Caco-2 (cell line): ENCODE measurements at regions of chr1 and their contacts with region 1.

Region 1: GRCh38 chr1:179809506-179810366 is 66.6 kb downstream of the FAM163A start:
- DNase-seq: peak; percentile 70 to 71
- H3K4me3 ChIP-seq: no peak overlapping the region
- H3K4me3 Mint-ChIP-seq: no peak overlapping the region
- H3K27ac Mint-ChIP-seq: no peak overlapping the region
- H3K4me1 ChIP-seq: peaks cover 34% of the 10 kb centered on the region
- H3K4me1 Mint-ChIP-seq: peaks cover 12% of the 10 kb centered on the region
- H3K27me3 ChIP-seq: no peaks in the 10 kb centered on the region
- H3K27me3 Mint-ChIP-seq: peaks cover 14% of the 10 kb centered on the region
- CTCF ChIP-seq: peak; percentile 85 to 88

Region 2: GRCh38 chr1:179278920-179279319 is 530.8 kb before region 1 on chr1:
- CTCF ChIA-PET with region 1: no interaction called
- POLR2A ChIA-PET with region 1: no interaction called
- intact Hi-C with region 1: no loop called
- DNase-seq: no peak
- H3K4me3 ChIP-seq: no peak overlapping the region
- H3K4me3 Mint-ChIP-seq: no peak overlapping the region
- H3K27ac Mint-ChIP-seq: no peak overlapping the region
- H3K4me1 ChIP-seq: peaks cover 13% of the 10 kb centered on the region
- H3K4me1 Mint-ChIP-seq: peaks cover 14% of the 10 kb centered on the region
- H3K27me3 ChIP-seq: no peaks in the 10 kb centered on the region
- H3K27me3 Mint-ChIP-seq: no peaks in the 10 kb centered on the region
- CTCF ChIP-seq: no peak

Region 3: GRCh38 chr1:179706339-179706941 is 103.3 kb before region 1 on chr1:
- CTCF ChIA-PET with region 1: interaction called, 237 read pairs
- POLR2A ChIA-PET with region 1: interaction called, 9 read pairs
- intact Hi-C with region 1: loop called (anchors 1 kb)
- DNase-seq: peak; percentile 47 to 69
- H3K4me3 ChIP-seq: no peak overlapping the region
- H3K4me3 Mint-ChIP-seq: no peak overlapping the region
- H3K27ac Mint-ChIP-seq: no peak overlapping the region
- H3K4me1 ChIP-seq: peaks cover 8% of the 10 kb centered on the region
- H3K4me1 Mint-ChIP-seq: peaks cover 8% of the 10 kb centered on the region
- H3K27me3 ChIP-seq: no peaks in the 10 kb centered on the region
- H3K27me3 Mint-ChIP-seq: peaks cover 14% of the 10 kb centered on the region
- CTCF ChIP-seq: peak; percentile 75 to 80

Region 4: DNA sequence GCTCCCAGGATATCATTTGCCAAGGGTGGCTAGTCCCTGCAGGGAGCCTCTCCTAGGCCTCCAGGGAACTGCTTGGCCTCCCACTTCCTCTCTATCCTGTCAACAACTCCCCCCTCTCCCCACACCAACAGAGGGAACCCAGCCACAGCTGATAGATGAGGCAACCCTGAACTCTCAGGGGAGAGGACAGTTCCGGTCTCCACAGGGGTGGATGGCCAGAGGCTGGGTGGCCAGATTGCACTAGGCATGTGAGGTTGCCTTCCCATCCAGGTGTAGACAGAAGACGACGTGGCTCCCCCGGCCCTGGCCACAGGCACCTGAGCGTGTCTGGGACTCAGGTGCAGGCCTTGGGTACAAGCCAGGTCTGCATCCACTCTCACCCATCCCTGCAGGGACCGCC is 14.5 kb after region 1 on chr1:
- CTCF ChIA-PET with region 1: interaction called, 14 read pairs
- POLR2A ChIA-PET with region 1: no interaction called
- intact Hi-C with region 1: no loop called
- DNase-seq: no peak
- H3K4me3 ChIP-seq: no peak overlapping the region
- H3K4me3 Mint-ChIP-seq: no peak overlapping the region
- H3K27ac Mint-ChIP-seq: no peak overlapping the region
- H3K4me1 ChIP-seq: no peaks in the 10 kb centered on the region
- H3K4me1 Mint-ChIP-seq: peaks cover 6% of the 10 kb centered on the region
- H3K27me3 ChIP-seq: no peaks in the 10 kb centered on the region
- H3K27me3 Mint-ChIP-seq: no peaks in the 10 kb centered on the region
- CTCF ChIP-seq: no peak

Region 5: DNA sequence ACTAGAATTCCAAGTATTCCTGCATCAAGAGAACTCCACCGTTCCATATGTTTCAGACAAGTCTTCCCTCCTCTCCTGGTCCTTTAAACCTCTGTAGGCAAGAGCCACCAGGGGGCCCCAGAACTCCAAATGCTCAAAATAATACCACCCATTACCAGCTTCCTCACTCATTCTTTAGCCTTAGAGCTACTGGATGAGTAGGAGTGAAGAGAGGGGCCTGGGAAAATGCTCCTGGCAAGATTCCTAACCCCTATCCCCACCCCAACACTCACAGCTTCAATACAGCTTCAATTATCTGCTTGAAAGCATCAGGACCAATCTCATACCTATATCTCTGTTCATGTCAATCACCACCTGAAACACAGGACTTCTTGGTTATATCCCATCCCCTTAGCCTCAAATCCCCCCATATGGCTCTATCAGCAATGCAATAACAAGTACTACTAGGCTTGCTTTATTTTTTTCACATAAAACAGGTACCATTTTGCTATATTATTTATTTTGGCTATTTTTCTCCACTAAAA is 58.1 kb after region 1 on chr1:
- CTCF ChIA-PET with region 1: interaction called, 10 read pairs
- POLR2A ChIA-PET with region 1: no interaction called
- intact Hi-C with region 1: no loop called
- DNase-seq: peak; percentile 61 to 69
- H3K4me3 ChIP-seq: no peak overlapping the region
- H3K4me3 Mint-ChIP-seq: no peak overlapping the region
- H3K27ac Mint-ChIP-seq: no peak overlapping the region
- H3K4me1 ChIP-seq: peaks cover 4% of the 10 kb centered on the region
- H3K4me1 Mint-ChIP-seq: peaks cover 11% of the 10 kb centered on the region
- H3K27me3 ChIP-seq: no peaks in the 10 kb centered on the region
- H3K27me3 Mint-ChIP-seq: no peaks in the 10 kb centered on the region
- CTCF ChIP-seq: peak; percentile 77 to 83

Region 6: DNA sequence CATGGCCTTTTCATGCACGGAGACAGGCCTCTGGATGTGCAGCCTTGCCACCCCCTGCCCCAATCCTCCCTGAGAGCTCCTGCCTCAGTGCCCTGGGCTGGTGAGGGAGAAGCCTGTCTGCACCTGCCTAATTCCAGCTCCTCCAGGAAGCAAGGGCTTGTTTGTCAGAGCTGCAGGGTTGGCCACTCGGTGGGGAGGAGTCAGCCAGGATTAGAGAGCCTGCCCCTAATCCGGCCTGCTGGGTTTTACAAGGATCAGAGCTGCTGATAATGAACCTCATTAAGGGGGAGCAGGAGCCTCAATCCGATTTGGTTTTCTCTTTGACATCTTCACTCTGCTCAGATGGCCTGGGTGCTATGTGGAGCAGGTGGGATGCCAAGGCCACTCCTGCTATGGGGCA is 388.5 kb after region 1 on chr1:
- CTCF ChIA-PET with region 1: no interaction called
- POLR2A ChIA-PET with region 1: no interaction called
- intact Hi-C with region 1: no loop called
- DNase-seq: no peak
- H3K4me3 ChIP-seq: no peak overlapping the region
- H3K4me3 Mint-ChIP-seq: no peak overlapping the region
- H3K27ac Mint-ChIP-seq: no peak overlapping the region
- H3K4me1 ChIP-seq: peaks cover 4% of the 10 kb centered on the region; the same call in 1 of the 2 replicates
- H3K4me1 Mint-ChIP-seq: peaks cover 9% of the 10 kb centered on the region
- H3K27me3 ChIP-seq: no peaks in the 10 kb centered on the region
- H3K27me3 Mint-ChIP-seq: no peaks in the 10 kb centered on the region
- CTCF ChIP-seq: no peak

Region 7: GRCh38 chr1:180563026-180563827 is 753.5 kb after region 1 on chr1:
- CTCF ChIA-PET with region 1: no interaction called
- POLR2A ChIA-PET with region 1: no interaction called
- intact Hi-C with region 1: no loop called
- DNase-seq: peak; percentile 13 to 38
- H3K4me3 ChIP-seq: no peak overlapping the region
- H3K4me3 Mint-ChIP-seq: no peak overlapping the region
- H3K27ac Mint-ChIP-seq: peak overlapping the region; percentile 66
- H3K4me1 ChIP-seq: peaks cover 41% of the 10 kb centered on the region
- H3K4me1 Mint-ChIP-seq: peaks cover 37% of the 10 kb centered on the region
- H3K27me3 ChIP-seq: no peaks in the 10 kb centered on the region
- H3K27me3 Mint-ChIP-seq: no peaks in the 10 kb centered on the region
- CTCF ChIP-seq: no peak